ENCODE measurements at regions of chr1 and their contacts with region 1.

Region 1: DNA sequence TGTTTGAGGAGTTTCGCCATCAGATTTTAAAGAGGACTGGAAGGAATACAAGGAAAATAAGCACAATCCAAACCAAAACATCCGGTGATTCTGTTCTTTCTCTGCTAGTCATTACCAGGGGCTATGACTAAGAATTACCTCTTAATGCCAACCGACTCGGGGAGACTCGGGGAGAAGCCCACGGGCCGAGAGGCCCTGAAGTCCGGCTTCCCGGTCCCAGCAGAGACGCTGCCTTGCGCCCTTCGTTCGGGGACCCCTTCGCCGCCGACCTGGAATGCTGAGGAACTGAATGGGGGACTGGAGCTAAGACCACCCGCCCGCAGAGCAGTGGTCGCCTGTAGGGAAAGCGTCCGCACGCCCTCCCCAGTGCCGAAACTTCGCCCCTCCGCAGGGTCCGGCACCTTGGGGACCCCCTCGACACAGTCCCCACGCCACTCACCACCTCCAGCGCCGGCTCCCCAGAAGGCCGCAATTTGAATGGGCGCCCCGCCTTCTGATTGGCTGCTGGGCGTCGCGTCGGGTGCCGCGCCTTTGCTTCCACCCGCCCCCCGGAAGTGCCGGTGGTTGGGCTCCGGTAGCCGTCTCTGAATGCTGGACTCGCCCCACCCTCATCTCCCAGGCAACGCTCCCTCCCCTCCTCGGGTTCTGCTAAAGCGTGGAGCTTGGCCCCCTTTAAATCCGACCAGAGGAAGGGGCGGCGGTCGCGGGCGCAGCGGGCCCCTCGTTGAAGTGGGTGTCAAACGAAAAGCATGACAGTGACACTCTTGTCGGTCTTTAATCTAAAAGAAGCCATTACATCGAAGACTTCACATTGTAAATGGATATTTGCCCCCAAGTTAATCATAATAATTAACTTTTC is at the start of gene KIF14:
- DNase-seq: peak; percentile 90 to 95 (median 93)
- ATAC-seq: peak; percentile 100
- H3K4me3 ChIP-seq: peak within 1 kb of the TSS; percentile 18 to 59
- H3K27ac ChIP-seq: peak within 1 kb of the TSS in 3 of 4 donors; percentile 5 to 67 (median 59)
- H3K4me1 ChIP-seq: peaks cover 10% of the 10 kb centered on the region
- H3K27me3 ChIP-seq: no peaks in the 10 kb centered on the region
- CTCF ChIP-seq: no peak
- POLR2A ChIP-seq: no peak
- total RNA-seq, gene KIF14: not detected

Region 2: GRCh38 chr1:199995092-199995685 is 625.3 kb before region 1 on chr1:
- intact Hi-C with region 1: no loop called
- DNase-seq: no peak
- ATAC-seq: no peak
- H3K4me3 ChIP-seq: no peak overlapping the region
- H3K27ac ChIP-seq: no peak overlapping the region
- H3K4me1 ChIP-seq: peaks cover 9% of the 10 kb centered on the region
- H3K27me3 ChIP-seq: no peaks in the 10 kb centered on the region
- CTCF ChIP-seq: no peak
- POLR2A ChIP-seq: no peak

Region 3: DNA sequence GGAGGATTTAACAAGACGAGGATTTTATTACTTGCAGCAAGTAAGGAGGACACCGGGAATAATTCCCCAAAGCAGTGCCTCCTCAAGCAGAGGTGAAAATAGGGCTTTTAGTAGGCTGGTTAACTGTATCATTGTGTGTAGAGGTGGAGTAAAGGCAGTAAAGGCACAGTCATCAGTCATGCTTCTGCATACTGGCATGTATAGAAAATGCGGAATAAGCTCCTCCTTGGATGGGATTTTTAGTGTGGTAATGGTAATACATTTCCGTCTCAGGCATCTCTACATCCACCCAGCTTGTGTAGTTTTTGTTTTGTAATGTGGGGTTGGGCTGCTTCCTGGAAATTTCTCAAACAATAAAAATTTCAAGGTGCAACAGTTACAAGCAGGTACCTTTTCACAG is 224.9 kb after region 1 on chr1:
- intact Hi-C with region 1: loop called (anchors 10 kb)
- DNase-seq: no peak
- ATAC-seq: no peak
- H3K4me3 ChIP-seq: no peak overlapping the region
- H3K27ac ChIP-seq: no peak overlapping the region
- H3K4me1 ChIP-seq: no peaks in the 10 kb centered on the region
- H3K27me3 ChIP-seq: no peaks in the 10 kb centered on the region
- CTCF ChIP-seq: no peak
- POLR2A ChIP-seq: no peak

Measured in body of pancreas (tissue), 4 donors.